ENCODE measurements at regions of chrX and their contacts with region 1.

Region 1: DNA sequence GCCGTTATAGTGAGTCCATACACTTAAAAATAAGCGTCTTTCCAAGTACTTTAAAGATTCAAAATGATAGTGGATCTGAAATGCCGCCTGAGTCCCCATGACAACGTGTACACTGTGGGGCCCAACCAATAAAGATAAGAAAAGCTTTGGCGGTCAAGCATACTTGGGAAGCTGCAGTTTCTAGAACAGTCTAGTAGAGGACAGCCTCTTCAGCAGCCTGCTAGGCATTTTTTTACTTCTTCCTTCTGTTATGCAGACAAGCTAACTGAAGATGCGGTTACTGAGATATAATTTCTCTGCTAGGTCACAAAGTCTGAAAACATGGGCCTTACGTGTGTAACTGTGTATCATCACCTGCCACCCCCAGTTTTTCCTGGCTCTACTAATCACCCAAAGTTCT is 402 bp upstream of the UPRT start:
- DNase-seq: no peak
- ATAC-seq: no peak
- H3K4me3 Mint-ChIP-seq: peak overlapping the region; percentile 99
- H3K27ac Mint-ChIP-seq: peak overlapping the region; percentile 98
- H3K4me1 Mint-ChIP-seq: peaks cover 29% of the 10 kb centered on the region
- H3K27me3 Mint-ChIP-seq: no peaks in the 10 kb centered on the region
- CTCF ChIP-seq: no peak

Region 2: DNA sequence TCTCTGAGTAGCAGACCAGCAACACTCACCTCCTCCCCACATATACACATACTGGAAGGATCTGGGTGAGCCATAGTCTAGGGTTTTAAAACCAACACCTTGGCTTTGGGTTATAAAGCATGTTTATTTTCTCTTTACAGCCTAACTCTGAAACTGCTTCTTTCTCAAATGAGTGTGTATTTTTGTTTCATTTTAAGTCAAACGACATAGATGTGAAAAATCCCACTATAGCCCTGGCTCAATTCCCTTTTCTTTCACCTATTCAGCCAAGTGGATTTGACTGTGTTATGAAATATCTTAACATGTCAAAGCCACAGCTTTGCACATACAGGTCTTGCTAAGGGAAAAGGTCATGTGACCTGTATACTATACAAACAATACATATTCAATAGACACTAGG is 362.0 kb before region 1 on chrX:
- CTCF ChIA-PET with region 1: no interaction called
- POLR2A ChIA-PET with region 1: no interaction called
- intact Hi-C with region 1: no loop called
- DNase-seq: no peak
- ATAC-seq: no peak
- H3K4me3 Mint-ChIP-seq: no peak overlapping the region
- H3K27ac Mint-ChIP-seq: no peak overlapping the region
- H3K4me1 Mint-ChIP-seq: no peaks in the 10 kb centered on the region
- H3K27me3 Mint-ChIP-seq: no peaks in the 10 kb centered on the region
- CTCF ChIP-seq: no peak

Region 3: DNA sequence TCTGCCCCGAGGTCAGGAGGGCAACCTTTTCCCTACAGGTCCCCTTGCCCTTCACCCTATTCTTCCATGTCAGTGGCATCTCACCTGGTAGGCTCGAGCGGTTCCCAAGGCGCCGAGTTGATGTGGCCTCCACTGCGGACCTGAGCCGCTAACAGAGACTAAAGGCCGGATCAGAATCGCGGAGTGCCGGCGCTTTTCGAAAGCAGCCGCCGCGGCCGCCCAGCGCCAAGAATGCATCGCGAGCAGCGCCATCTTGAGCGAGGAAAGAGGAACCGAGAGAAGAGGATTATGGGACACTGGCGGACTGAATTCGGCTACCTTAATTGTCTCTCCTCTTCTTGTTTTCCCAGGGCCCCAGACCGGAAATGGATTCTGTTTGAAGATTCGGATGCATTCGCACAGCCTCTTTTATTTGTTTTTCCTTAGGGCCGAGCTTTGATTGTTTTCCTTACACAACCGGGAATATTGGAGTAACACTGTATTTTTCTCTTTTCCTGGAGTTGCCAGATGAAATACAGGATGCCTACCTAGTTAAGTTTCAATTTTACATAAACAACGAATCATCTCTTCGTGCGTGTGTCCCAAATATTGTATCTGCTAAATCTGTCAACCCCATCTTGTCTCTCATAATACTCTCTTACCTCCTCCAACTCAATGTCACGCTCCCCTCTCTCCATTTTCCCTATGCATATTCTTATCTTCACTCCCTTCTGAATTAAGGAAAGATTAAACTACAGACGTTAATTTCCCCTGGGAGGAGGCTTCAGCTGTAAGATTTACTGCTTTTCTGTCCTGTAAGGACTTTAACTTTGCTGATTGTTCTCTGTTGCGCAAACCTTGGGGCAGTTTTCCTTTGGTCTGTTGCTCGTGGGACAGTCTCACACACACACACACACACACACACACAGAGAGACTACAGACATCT is 117.2 kb before region 1 on chrX and contains the start of gene ABCB7:
- CTCF ChIA-PET with region 1: no interaction called
- POLR2A ChIA-PET with region 1: no interaction called
- intact Hi-C with region 1: loop called (anchors 5 kb)
- DNase-seq: peak; percentile 70
- ATAC-seq: peak; percentile 74
- H3K4me3 Mint-ChIP-seq: peak within 1 kb of the TSS; percentile 90
- H3K27ac Mint-ChIP-seq: peak within 1 kb of the TSS; percentile 95
- H3K4me1 Mint-ChIP-seq: peaks cover 51% of the 10 kb centered on the region
- H3K27me3 Mint-ChIP-seq: no peaks in the 10 kb centered on the region
- CTCF ChIP-seq: no peak
- total RNA-seq, gene ABCB7: 50.5 to 52.0 TPM

Region 4: DNA sequence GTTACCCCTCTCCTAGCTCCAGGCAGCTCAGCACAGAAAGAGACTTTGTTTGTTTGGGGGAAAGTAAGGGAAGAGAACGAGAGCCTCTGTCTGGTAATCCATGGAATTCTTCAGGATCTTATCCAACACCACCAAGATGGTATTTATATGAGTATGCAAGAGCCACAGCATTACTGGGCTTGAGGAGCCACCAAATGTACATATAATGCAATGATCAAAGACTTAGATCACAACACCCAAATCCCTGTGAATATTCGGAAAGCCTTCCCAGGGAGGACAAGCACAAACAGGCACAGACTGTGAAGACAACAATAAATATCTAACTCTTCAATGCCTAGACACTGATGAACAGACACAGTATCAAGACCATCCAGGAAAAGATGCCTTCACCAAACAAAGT is 117.0 kb after region 1 on chrX:
- CTCF ChIA-PET with region 1: no interaction called
- POLR2A ChIA-PET with region 1: no interaction called
- intact Hi-C with region 1: no loop called
- DNase-seq: no peak
- ATAC-seq: no peak
- H3K4me3 Mint-ChIP-seq: no peak overlapping the region
- H3K27ac Mint-ChIP-seq: no peak overlapping the region
- H3K4me1 Mint-ChIP-seq: no peaks in the 10 kb centered on the region
- H3K27me3 Mint-ChIP-seq: no peaks in the 10 kb centered on the region
- CTCF ChIP-seq: no peak